ENCODE measurements at regions of chr6 and their contacts with region 1.

Region 1: DNA sequence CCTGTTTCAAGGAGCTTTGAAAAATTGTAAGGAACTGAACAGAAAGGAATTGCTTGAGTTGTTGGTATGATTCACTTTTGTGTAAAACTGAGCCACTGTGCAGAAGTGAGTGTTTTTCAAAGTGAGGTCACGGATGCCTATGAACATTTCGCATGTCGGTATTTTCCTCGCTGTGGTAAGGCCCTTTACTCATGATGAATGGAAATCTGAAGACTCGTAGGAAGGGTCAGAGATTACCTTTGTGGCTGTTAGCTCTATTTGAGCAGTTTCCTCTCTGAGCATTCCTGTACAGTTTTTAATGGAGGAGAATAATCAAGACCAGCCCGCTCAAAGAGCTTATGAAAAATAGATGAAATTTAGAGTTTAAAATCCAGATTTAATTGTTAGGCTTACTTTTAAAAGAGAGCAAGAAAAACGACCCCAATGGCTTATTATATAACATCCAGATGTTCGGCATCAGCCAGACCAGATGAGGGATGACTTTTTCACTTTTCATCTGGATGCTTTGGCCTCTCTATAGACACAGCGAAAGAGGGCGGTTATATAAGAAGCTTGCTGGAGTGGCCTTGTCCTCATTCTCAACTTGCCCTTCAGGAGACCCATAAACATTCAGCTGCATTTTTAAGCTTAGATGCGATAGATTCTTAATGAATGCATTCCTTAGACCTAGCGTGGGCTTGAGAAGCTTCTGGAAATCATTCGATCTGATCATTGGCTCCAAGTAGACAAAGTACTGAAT is 99.5 kb downstream of the CD83 start:
- DNase-seq: peak; percentile 98
- ATAC-seq: peak; percentile 48
- H3K4me3 ChIP-seq: no peak overlapping the region
- H3K27ac ChIP-seq: no peak overlapping the region
- H3K4me1 ChIP-seq: peaks cover 4% of the 10 kb centered on the region; the same call in 1 of the 2 replicates
- H3K27me3 ChIP-seq: no peaks in the 10 kb centered on the region
- CTCF ChIP-seq: no peak
- POLR2A ChIP-seq: no peak
- RAD21 ChIP-seq: 0 out of 2 replicates have a peak, but pooled peaks have one; percentile 11

Region 2: DNA sequence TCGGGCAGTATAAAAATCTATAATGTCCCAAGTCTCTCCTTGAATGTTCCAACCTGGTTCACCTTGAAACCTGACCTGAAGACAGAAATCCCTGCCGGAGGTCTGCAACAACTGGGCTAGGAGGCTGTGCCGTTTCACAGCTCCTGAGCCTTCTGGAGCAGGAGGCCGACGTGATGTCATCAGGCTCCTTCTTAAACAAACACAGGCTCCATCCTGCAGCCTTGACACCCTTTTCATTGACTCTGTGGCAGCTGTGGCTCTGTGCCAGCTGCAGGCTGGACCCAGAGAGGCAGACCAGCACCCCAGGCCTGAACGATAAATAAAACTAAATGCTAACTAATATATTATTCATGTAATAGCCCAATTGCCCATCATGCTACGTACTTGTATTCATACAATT is 384.4 kb after region 1 on chr6:
- CTCF ChIA-PET with region 1: no interaction called
- POLR2A ChIA-PET with region 1: interaction called, 12 read pairs
- dilution Hi-C with region 1: no loop called
- in situ Hi-C with region 1: no loop called
- intact Hi-C with region 1: no loop called
- DNase-seq: no peak
- ATAC-seq: no peak
- H3K4me3 ChIP-seq: no peak overlapping the region
- H3K27ac ChIP-seq: no peak overlapping the region
- H3K4me1 ChIP-seq: no peaks in the 10 kb centered on the region
- H3K27me3 ChIP-seq: no peaks in the 10 kb centered on the region
- CTCF ChIP-seq: no peak
- POLR2A ChIP-seq: no peak
- RAD21 ChIP-seq: no peak

Measured in IMR-90 (cell line).